Activated CD4-positive, alpha-beta memory T cell treated with anti-CD3 and anti-CD28 coated beads, Interleukin-2, amount 10 ng/mL, durations not matched to agents 7 days and 5 days (primary cell): ENCODE measurements at regions of chr14 and their contacts with region 1.

Region 1: DNA sequence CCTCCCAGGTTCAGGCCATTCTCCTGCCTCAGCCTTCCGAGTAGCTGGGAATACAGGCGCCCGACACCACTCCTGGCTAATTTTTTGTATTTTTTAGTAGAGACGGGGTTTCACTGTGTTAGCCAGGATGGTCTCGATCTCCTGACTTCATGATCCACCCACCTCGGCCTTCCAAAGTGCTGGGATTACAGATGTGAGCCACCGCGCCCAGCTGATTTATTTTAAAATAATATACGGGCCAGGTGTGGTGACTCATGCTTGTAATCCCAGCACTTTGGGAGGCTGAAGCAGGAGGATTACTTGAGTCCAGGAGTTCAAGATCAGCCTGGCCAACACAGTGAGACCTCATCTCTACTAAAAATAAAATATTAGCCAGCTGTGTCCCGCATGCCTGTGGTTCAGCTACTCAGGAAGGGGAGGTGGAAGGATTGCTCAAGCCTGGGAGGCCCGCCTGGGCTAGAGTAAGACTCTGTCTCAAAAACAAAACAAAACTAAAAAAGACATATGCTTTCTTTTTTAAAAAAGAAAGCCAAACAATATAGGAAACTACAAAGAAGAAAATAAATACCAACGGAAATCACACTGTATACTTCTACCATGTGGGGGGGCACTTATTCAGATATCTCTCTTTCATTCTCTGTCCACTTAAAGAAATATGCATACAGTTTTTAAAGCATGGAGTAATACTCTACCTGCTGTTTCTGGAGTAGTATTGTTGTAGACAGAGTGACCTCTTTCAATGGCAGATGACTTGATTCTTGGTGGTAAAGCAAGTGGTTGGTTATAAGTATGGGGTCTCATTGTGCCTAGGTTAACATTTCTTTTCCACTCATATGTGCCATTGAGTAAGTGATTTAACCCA is 930 bp upstream of the MIA2 start:
- DNase-seq: peak; percentile 25
- H3K4me3 Mint-ChIP-seq: no peak overlapping the region
- H3K27ac Mint-ChIP-seq: peak overlapping the region; percentile 75
- H3K4me1 Mint-ChIP-seq: peaks cover 56% of the 10 kb centered on the region
- H3K27me3 Mint-ChIP-seq: no peaks in the 10 kb centered on the region

Region 2: GRCh38 chr14:39102969-39103957 is 129.5 kb before region 1 on chr14 and contains the start of gene SEC23A:
- CTCF ChIA-PET with region 1: no interaction called
- POLR2A ChIA-PET with region 1: interaction called, 14 read pairs
- DNase-seq: peak; percentile 88
- H3K4me3 Mint-ChIP-seq: peak within 1 kb of the TSS; percentile 97
- H3K27ac Mint-ChIP-seq: peak within 1 kb of the TSS; percentile 91
- H3K4me1 Mint-ChIP-seq: peaks cover 47% of the 10 kb centered on the region
- H3K27me3 Mint-ChIP-seq: no peaks in the 10 kb centered on the region
- total RNA-seq, gene SEC23A: 59.7 to 69.0 TPM

Region 3: GRCh38 chr14:39169541-39169900 is 63.3 kb before region 1 on chr14:
- CTCF ChIA-PET with region 1: interaction called, 9 read pairs
- POLR2A ChIA-PET with region 1: interaction called, 40 read pairs
- DNase-seq: no peak
- H3K4me3 Mint-ChIP-seq: peak overlapping the region; percentile 84
- H3K27ac Mint-ChIP-seq: peak overlapping the region; percentile 98
- H3K4me1 Mint-ChIP-seq: peaks cover 59% of the 10 kb centered on the region
- H3K27me3 Mint-ChIP-seq: no peaks in the 10 kb centered on the region

Region 4: DNA sequence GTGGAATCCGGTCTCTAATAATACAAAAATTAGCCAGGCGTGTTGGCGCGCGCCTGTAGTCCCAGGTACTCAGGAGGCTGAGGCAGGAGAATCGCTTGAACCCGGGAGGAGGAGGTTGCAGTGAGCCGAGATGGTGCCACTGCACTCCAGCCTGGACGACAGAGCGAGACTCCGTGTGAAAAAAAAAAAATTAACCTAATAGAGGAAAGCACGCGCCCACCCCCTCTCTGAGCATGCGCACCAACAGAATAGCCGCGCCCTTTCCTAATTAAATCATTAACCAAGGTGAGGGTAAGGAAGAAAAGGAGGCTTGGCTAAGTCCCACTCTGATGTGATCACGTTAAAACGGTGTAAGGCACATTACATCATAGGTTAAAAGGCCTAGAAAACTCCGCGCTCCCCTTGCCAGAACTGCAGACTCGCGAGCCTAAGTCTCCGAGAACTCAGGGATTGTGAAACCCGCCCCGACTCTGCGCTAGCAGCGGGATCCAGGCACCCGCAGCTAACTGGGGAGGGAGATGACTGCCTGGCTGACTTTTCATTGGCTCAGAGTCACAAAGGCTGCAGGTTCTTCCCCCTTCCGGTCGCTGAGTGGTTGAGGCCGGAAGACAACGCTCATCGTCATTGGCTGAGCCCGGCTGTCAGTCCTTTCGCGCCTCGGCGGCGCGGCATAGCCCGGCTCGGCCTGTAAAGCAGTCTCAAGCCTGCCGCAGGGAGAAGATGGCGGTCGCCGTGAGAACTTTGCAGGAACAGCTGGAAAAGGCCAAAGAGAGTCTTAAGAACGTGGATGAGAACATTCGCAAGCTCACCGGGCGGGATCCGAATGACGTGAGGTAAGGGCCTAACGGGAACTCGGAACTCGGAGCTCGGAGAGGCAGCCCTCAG is 58.0 kb before region 1 on chr14 and contains the start of gene PNN:
- CTCF ChIA-PET with region 1: interaction called, 9 read pairs
- POLR2A ChIA-PET with region 1: interaction called, 40 read pairs
- DNase-seq: peak; percentile 98
- H3K4me3 Mint-ChIP-seq: peak within 1 kb of the TSS; percentile 96
- H3K27ac Mint-ChIP-seq: peak within 1 kb of the TSS; percentile 94
- H3K4me1 Mint-ChIP-seq: peaks cover 57% of the 10 kb centered on the region
- H3K27me3 Mint-ChIP-seq: no peaks in the 10 kb centered on the region
- total RNA-seq, gene PNN: 75.0 to 75.3 TPM

Region 5: DNA sequence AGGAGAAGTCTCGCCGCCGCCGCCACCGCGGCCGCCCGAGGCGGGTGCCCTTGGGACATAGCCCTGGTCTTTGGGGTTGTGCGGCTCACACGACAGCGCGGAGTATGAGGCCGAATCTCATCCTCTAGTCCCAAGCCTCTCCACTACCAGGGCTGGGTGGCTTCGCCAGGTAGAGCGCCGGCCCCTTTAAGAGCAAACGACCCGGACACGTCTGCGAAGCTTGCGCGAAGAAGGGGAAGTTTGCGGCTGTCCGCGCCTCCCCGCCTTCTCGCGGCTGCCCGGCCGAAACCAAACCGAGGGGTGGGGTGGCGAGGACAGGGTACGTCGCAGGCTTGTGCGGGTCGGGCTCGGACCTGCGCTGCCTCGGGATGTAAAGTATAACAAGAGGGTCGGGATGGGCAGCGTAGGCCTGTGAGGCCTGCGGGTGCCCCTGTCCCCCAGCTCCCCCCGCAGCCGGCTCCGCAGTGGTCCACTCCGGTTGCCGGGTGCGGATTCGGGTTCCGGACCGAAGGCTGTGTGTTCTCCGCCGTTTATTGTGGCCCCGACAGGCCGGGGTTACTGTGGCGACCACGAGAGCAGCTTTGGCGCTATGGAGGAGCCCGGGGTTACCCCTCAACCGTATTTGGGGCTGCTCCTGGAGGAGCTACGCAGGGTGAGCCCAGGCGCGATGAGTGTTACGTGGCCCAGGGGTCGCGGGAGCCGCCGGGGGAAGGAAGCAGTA is 34.2 kb after region 1 on chr14:
- CTCF ChIA-PET with region 1: interaction called, 4 read pairs
- POLR2A ChIA-PET with region 1: interaction called, 75 read pairs
- DNase-seq: peak; percentile 84
- H3K4me3 Mint-ChIP-seq: peak overlapping the region; percentile 73
- H3K27ac Mint-ChIP-seq: peak overlapping the region; percentile 94
- H3K4me1 Mint-ChIP-seq: peaks cover 50% of the 10 kb centered on the region
- H3K27me3 Mint-ChIP-seq: no peaks in the 10 kb centered on the region

Region 6: DNA sequence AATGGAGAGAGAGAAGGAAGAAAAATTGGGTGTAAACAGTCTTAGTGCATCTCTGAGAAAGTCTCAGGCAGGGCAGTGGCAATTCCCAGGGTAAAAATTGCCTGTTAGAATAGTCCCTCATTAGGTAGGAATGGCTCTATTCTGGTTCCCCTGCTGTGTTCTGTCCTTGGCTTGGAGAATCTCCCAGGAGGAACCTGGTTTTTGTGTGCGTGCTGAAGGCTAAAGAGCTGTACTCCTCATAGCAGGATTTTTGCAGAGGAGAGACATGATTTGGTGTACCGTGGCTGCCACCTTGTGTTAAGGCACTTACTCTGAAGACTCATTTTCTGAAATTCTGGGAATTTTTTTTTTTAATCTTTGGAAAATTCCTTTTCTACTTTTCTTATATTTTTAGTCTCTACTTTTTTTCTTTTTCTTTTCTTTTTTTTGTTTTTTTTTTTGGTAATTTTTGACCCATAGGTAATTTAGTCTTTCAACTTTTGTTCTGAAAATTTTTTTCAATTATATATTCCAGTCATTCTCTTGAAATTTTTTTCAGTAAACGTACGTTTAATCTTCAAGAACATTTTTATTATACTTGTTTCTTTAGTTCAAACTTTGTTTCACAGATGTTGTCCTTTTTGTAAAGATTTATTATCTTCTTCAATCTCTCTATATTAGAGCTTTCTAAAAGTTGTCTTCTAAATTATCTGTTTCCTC is 135.6 kb after region 1 on chr14:
- CTCF ChIA-PET with region 1: interaction called, 10 read pairs
- POLR2A ChIA-PET with region 1: no interaction called
- DNase-seq: peak; percentile 39
- H3K4me3 Mint-ChIP-seq: no peak overlapping the region
- H3K27ac Mint-ChIP-seq: no peak overlapping the region
- H3K4me1 Mint-ChIP-seq: peaks cover 1% of the 10 kb centered on the region
- H3K27me3 Mint-ChIP-seq: no peaks in the 10 kb centered on the region

Region 7: GRCh38 chr14:39395555-39396254 is 162.9 kb after region 1 on chr14:
- CTCF ChIA-PET with region 1: no interaction called
- POLR2A ChIA-PET with region 1: no interaction called
- DNase-seq: no peak
- H3K4me3 Mint-ChIP-seq: no peak overlapping the region
- H3K27ac Mint-ChIP-seq: no peak overlapping the region
- H3K4me1 Mint-ChIP-seq: no peaks in the 10 kb centered on the region
- H3K27me3 Mint-ChIP-seq: no peaks in the 10 kb centered on the region

Region 8: GRCh38 chr14:39426605-39427004 is 193.8 kb after region 1 on chr14:
- CTCF ChIA-PET with region 1: interaction called, 48 read pairs
- POLR2A ChIA-PET with region 1: interaction called, 37 read pairs
- DNase-seq: no peak
- H3K4me3 Mint-ChIP-seq: no peak overlapping the region
- H3K27ac Mint-ChIP-seq: no peak overlapping the region
- H3K4me1 Mint-ChIP-seq: peaks cover 45% of the 10 kb centered on the region
- H3K27me3 Mint-ChIP-seq: no peaks in the 10 kb centered on the region